ENCODE measurements at regions of chr12 and their contacts with region 1.

Region 1: DNA sequence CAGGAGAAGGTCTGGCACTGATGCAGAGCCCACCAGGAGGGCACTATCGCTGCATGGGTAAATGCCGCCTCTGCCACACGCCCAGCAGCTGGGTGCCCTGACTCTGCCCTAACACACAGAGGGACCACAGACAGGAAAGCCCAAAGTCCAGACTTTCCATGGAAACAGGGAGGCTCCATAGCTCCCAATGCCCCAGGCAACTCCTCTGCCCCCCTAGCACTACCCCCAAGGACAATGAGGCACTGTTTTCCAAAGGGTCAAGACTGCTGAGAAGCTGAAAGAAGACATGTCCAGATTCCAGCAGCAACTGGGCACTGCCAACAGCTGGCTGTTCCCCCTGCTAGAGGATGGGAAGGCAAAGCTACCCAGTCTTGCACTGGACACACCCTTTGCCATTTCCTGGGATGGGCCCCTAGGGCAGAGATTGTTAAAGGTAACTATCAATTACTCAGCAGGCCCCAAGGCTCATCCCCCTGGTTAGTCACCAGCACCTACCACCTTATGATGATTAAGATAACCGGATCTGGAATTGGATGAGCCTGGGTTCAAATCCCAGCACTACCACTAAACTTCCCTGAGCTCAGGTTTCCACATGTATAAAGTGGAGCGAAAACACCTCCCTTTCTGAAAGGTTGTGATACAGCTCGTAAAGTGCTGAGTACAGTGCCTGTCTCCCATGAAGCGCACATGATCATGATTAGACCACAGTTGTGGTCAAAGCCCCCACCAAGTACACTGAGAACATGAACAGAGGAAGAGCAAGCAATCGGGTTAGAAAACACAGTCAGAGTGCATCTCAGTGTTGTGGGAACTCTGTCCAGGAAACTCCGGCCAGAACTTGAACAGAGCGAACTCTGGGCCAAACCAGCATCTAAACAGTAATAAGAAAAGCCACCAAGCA is 3.3 kb downstream of the PXN start:
- DNase-seq: peak in 1 of 5 donors; percentile 43
- H3K4me3 ChIP-seq: peak overlapping the region in 2 of 3 donors; percentile 44 to 80
- H3K27ac ChIP-seq: peak overlapping the region; percentile 92 to 96
- H3K4me1 ChIP-seq: peaks cover 7 to 49% (median 46%) of the 10 kb centered on the region in 3 donors
- H3K27me3 ChIP-seq: no peaks in the 10 kb centered on the region
- CTCF ChIP-seq: no peak

Region 2: GRCh38 chr12:120142231-120142877 is 119.8 kb before region 1 on chr12:
- intact Hi-C with region 1: no loop called
- DNase-seq: peak in 1 of 5 donors; percentile 58
- H3K4me3 ChIP-seq: no peak overlapping the region
- H3K27ac ChIP-seq: no peak overlapping the region
- H3K4me1 ChIP-seq: peaks cover 0 to 3% (median 0%) of the 10 kb centered on the region in 3 donors
- H3K27me3 ChIP-seq: no peaks in the 10 kb centered on the region
- CTCF ChIP-seq: no peak

Region 3: GRCh38 chr12:120228291-120229070 is 33.7 kb before region 1 on chr12:
- intact Hi-C with region 1: loop called (anchors 5 kb)
- DNase-seq: peak; percentile 92 to 94 (median 94)
- H3K4me3 ChIP-seq: peak overlapping the region in 2 of 3 donors; percentile 21 to 48
- H3K27ac ChIP-seq: peak overlapping the region; percentile 84 to 92
- H3K4me1 ChIP-seq: peaks cover 2 to 74% (median 73%) of the 10 kb centered on the region in 3 donors
- H3K27me3 ChIP-seq: no peaks in the 10 kb centered on the region
- CTCF ChIP-seq: peak; percentile 99

Region 4: DNA sequence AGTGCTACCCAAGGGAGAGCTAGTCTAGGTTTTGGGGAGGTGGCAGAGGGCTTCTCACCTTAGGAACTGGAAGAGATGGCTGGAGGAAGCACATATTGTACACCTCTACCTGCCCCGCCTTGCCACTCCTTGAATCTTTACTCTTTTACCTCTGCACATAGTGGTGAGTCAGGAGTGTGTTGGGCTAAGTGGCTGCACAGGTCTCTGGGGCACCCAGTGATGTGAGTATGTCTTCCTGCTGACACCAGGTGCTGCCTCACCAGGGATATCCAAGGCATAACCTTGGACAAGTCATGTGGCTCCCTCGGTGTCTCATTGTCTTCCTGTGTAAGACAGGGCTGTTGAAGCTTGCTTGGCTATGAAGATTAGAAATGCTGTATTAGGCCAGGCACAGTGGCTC is 358.4 kb after region 1 on chr12:
- intact Hi-C with region 1: no loop called
- DNase-seq: peak in 1 of 5 donors; percentile 10
- H3K4me3 ChIP-seq: no peak overlapping the region
- H3K27ac ChIP-seq: no peak overlapping the region
- H3K4me1 ChIP-seq: no peaks in the 10 kb centered on the region
- H3K27me3 ChIP-seq: no peaks in the 10 kb centered on the region
- CTCF ChIP-seq: no peak